ENCODE measurements at regions of chr14 and their contacts with region 1.

Region 1: DNA sequence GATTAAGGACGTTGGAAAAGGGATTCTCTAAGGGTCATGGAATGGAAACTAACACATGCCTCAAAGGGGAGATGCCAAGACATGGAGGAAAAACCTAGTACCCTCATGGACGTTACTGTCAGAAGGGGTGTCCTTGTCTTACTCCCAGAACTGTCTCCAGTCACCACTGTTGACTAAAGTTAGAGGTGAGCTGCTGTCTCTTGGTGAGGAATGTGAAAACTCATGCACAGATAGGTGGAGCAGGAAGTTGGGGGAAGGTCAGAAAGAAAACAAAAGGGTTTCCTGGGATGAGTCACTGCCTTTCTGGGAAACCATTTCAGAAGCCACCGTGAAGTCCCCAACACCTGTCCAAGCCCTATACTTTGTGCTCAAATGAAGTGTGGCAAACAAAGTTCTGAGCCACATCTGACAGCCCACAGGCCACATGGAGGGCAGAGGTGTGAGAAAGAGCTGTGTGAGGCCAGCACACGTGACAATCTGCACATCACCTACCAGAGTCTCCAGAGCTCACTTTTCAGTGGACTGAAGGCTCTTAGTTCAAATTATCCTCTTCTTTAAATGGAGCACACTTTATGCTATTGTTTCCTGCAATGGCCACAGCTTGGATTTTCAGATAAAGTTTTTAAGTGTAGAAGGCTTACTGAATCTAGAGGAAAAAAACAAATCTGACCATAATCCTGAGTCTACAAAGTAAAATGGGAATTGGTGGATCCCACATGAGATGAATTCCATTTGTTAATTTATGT is 92.9 kb upstream of the EGLN3 start:
- DNase-seq: peak; percentile 87
- H3K4me3 Mint-ChIP-seq: no peak overlapping the region
- H3K27ac Mint-ChIP-seq: peak overlapping the region; percentile 54
- H3K4me1 Mint-ChIP-seq: peaks cover 25% of the 10 kb centered on the region
- H3K27me3 Mint-ChIP-seq: no peaks in the 10 kb centered on the region

Region 2: DNA sequence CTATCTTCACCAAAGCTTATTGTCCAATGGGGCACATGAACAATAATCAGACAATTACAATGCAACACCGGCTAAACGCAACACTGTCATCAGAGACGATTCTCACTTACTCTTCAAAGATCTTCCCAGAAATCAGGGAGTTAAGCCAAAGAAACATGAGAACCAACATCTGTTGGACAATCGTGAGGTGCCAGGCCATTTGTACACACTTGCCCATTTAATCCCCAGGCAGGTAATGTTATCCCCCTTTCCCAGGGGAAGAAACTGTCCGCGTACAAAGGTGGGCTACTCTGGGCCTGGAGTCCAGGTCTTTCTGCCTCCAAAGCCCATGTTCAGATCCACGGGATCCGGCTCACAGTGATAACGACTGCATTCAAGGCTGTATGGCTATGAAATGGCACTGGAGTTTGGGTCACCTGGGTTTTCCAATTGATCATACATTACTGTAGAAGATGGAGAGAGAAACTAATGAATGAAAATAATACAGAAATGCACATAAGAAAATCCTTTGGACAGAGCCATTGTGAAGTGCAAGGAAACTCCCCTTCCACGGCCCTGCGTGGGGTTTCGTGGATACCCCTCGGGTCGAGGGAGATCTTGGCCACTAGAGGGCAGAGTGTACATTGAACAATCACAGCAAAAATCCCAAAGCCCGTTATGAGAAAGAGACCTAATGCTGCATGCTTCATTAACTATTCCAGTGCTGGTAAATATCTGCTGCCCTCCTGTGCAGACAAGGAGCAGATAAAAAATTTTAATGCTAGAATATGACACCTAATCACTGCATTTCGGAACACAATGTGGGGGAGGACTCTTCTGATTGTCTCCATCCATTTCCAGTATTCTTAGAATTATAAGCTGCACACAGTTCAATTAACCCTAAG is 204.4 kb before region 1 on chr14:
- CTCF ChIA-PET with region 1: no interaction called
- intact Hi-C with region 1: loop called (anchors 5 kb)
- DNase-seq: peak; percentile 61
- H3K4me3 Mint-ChIP-seq: no peak overlapping the region
- H3K27ac Mint-ChIP-seq: no peak overlapping the region
- H3K4me1 Mint-ChIP-seq: no peaks in the 10 kb centered on the region
- H3K27me3 Mint-ChIP-seq: no peaks in the 10 kb centered on the region

Region 3: GRCh38 chr14:34059855-34060638 is 16.2 kb after region 1 on chr14:
- CTCF ChIA-PET with region 1: interaction called, 3 read pairs
- intact Hi-C with region 1: loop called (anchors 1 kb)
- DNase-seq: peak; percentile 52
- H3K4me3 Mint-ChIP-seq: peak overlapping the region; percentile 78
- H3K27ac Mint-ChIP-seq: no peak overlapping the region
- H3K4me1 Mint-ChIP-seq: peaks cover 5% of the 10 kb centered on the region
- H3K27me3 Mint-ChIP-seq: peaks cover 25% of the 10 kb centered on the region

Region 4: GRCh38 chr14:34461334-34462131 is 417.7 kb after region 1 on chr14:
- CTCF ChIA-PET with region 1: no interaction called
- intact Hi-C with region 1: loop called (anchors 5 kb)
- DNase-seq: peak; percentile 41
- H3K4me3 Mint-ChIP-seq: peak overlapping the region; percentile 87
- H3K27ac Mint-ChIP-seq: peak overlapping the region; percentile 65
- H3K4me1 Mint-ChIP-seq: peaks cover 16% of the 10 kb centered on the region
- H3K27me3 Mint-ChIP-seq: no peaks in the 10 kb centered on the region